WTC11 (cell line): ENCODE measurements at regions of chr5 and their contacts with region 1.

Region 1: GRCh38 chr5:167030500-167031120 is 1260.8 kb upstream of the WWC1 start:
- DNase-seq: peak; percentile 82
- ATAC-seq: peak; percentile 98
- H3K4me3 Mint-ChIP-seq: no peak overlapping the region; the same call in 1 of the 2 replicates
- H3K27ac Mint-ChIP-seq: no peak overlapping the region; the same call in 1 of the 2 replicates
- H3K4me1 Mint-ChIP-seq: peaks cover 12% of the 10 kb centered on the region
- H3K27me3 Mint-ChIP-seq: no peaks in the 10 kb centered on the region
- CTCF ChIP-seq: peak; percentile 76; the same call in 1 of the 2 replicates

Region 2: GRCh38 chr5:166772770-166773169 is 257.8 kb before region 1 on chr5:
- CTCF ChIA-PET with region 1: no interaction called
- POLR2A ChIA-PET with region 1: no interaction called
- DNase-seq: no peak
- ATAC-seq: no peak
- H3K4me3 Mint-ChIP-seq: no peak overlapping the region
- H3K27ac Mint-ChIP-seq: no peak overlapping the region
- H3K4me1 Mint-ChIP-seq: peaks cover 28% of the 10 kb centered on the region
- H3K27me3 Mint-ChIP-seq: no peaks in the 10 kb centered on the region
- CTCF ChIP-seq: no peak

Region 3: DNA sequence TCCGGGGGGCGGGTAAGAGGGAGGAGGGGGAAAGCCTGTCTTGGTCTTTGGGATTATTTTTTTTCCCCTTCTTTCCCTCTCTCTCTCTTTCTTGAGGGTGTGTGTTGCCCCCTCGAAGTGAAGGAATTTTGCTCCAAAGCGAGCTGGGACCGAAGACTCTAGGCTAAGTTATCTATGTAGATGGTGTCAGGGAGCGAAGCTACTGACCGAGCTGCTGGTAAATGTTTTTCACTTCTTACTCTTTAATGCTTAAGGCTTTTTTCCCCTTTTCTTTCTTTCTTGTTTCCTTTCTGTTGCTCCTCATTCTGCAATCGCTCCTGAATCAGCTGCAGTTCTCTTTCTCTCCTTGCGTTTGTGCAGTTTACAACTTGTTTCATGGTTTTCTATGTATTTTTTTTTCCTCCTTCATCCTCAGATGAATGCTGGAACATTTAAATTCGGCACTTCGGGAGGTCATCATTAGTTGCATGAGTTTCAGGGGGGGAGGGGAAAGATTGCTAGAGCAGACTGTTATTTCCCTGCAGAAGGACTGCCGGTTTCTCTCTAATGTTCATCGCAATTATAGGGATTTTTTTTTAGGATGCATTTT is 51.2 kb before region 1 on chr5:
- CTCF ChIA-PET with region 1: interaction called, 14 read pairs
- POLR2A ChIA-PET with region 1: interaction called, 3 read pairs
- DNase-seq: no peak
- ATAC-seq: peak; percentile 1; the same call in 1 of the 2 replicates
- H3K4me3 Mint-ChIP-seq: peak overlapping the region; percentile 90
- H3K27ac Mint-ChIP-seq: peak overlapping the region; percentile 73; the same call in 1 of the 2 replicates
- H3K4me1 Mint-ChIP-seq: peaks cover 50% of the 10 kb centered on the region
- H3K27me3 Mint-ChIP-seq: peaks cover 14% of the 10 kb centered on the region
- CTCF ChIP-seq: no peak

Region 4: DNA sequence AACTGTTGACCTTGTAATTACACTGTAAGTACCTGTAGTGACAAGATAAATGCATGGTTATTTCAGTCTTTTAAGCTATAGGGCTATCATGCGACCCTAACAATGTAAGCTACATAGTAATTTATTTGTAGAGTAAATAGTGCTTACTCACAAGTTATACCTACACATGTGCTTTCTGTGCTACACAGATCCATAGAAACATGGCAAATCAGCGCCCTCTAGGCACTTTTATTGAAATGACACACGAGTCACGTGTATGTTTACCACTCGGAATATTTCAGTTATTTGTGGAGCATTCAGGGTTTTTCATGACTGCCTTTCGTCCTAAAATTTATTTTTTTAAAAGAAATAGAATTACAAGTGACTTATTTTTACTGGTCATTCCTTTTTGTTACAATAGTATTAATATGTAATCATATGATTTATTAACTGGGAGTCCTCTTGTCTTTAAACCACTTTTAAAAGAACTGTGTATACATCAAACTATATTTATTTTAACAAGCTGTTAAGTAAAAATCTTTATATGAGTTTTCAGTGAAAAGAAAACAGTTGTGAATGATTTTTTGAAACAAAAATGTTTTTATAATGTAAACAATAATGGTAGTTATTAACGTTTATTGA is 18.5 kb after region 1 on chr5:
- CTCF ChIA-PET with region 1: interaction called, 17 read pairs
- POLR2A ChIA-PET with region 1: no interaction called
- DNase-seq: peak; percentile 45
- ATAC-seq: peak; percentile 60
- H3K4me3 Mint-ChIP-seq: no peak overlapping the region
- H3K27ac Mint-ChIP-seq: no peak overlapping the region
- H3K4me1 Mint-ChIP-seq: peaks cover 10% of the 10 kb centered on the region
- H3K27me3 Mint-ChIP-seq: no peaks in the 10 kb centered on the region
- CTCF ChIP-seq: peak; percentile 56

Region 5: DNA sequence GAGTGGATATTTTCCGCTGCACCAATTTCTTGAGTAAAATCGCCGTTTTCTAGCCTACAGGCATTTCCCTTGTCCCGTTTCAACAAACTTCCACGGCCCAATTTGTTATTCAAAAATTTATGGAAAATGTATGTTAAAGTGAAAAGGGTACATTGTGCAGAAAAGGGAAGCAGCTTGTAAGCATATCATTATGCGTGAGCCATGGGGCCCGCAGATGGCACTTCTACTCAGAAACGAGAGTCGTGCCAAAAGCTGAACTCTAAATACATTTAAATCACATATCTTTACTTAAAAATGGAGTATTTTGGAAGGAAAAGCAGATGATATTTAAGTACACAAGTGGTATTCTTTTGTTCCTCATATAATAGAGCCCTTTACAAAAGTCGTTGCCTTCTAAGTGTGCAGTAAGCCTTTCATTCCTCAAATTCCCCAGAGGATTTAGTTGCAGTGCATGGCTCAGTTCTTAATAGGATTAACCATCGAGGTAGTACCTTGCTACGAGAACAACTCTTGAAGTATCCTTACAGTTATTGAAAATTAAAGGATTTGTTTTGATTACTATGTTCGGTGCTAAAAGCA is 33.7 kb after region 1 on chr5:
- CTCF ChIA-PET with region 1: no interaction called
- POLR2A ChIA-PET with region 1: no interaction called
- DNase-seq: no peak
- ATAC-seq: peak; percentile 63
- H3K4me3 Mint-ChIP-seq: no peak overlapping the region
- H3K27ac Mint-ChIP-seq: no peak overlapping the region
- H3K4me1 Mint-ChIP-seq: peaks cover 18% of the 10 kb centered on the region
- H3K27me3 Mint-ChIP-seq: no peaks in the 10 kb centered on the region
- CTCF ChIP-seq: no peak

Region 6: GRCh38 chr5:167244583-167244982 is 214.0 kb after region 1 on chr5:
- CTCF ChIA-PET with region 1: interaction called, 16 read pairs
- POLR2A ChIA-PET with region 1: no interaction called
- DNase-seq: peak; percentile 65
- ATAC-seq: peak; percentile 96
- H3K4me3 Mint-ChIP-seq: no peak overlapping the region
- H3K27ac Mint-ChIP-seq: no peak overlapping the region
- H3K4me1 Mint-ChIP-seq: peaks cover 4% of the 10 kb centered on the region; the same call in 1 of the 2 replicates
- H3K27me3 Mint-ChIP-seq: no peaks in the 10 kb centered on the region
- CTCF ChIP-seq: peak; percentile 39; the same call in 1 of the 2 replicates

Region 7: DNA sequence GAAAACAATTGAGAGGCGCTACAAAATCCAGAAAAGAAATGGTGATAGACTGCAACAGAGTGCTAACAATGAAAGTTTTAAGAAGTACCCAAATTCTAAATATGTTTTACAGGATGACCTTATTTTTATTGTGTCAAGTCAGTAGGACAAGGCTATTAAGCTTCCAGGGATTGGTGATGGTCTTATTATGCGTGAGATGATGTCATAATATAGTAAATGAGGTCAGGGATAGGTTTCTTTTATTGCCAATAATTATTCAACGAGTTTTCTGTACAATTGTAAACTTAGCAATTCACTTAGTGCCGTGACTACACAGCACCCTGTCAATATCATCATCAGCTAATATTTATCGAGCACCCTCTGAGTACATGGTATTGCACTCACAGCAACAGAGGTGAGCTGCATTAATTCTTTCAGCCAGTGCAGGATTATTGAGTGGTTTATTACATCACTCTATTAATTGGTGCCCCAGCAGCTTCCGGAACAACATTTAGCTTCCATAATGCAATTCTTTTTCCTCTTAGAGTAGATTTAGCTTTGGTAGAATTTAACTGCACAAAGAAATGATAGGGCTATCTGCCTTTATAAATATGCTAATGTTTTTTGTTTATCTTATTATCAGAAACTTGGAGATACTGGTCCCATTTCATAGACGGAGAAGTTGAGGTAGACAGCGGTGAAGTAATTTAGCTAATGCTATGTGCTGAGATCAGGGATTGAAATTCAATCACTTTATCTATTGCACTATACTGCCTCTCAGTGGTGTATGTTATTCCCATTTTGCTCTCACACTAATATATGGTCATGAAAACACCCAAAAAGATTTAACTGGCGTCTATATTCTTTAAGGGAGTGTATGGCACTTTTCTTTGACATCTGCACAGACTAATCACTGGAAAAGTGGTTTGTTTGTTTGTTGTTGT is 534.7 kb after region 1 on chr5:
- CTCF ChIA-PET with region 1: interaction called, 11 read pairs
- POLR2A ChIA-PET with region 1: no interaction called
- DNase-seq: no peak
- ATAC-seq: peak; percentile 41
- H3K4me3 Mint-ChIP-seq: no peak overlapping the region
- H3K27ac Mint-ChIP-seq: no peak overlapping the region
- H3K4me1 Mint-ChIP-seq: peaks cover 32% of the 10 kb centered on the region
- H3K27me3 Mint-ChIP-seq: no peaks in the 10 kb centered on the region
- CTCF ChIP-seq: no peak